ENCODE measurements at regions of chr19 and their contacts with region 1.

Region 1: GRCh38 chr19:3324321-3324856 is 42.0 kb upstream of the NFIC start:
- DNase-seq: peak in 1 of 2 donors; percentile 73
- ATAC-seq: peak; percentile 59

Region 2: DNA sequence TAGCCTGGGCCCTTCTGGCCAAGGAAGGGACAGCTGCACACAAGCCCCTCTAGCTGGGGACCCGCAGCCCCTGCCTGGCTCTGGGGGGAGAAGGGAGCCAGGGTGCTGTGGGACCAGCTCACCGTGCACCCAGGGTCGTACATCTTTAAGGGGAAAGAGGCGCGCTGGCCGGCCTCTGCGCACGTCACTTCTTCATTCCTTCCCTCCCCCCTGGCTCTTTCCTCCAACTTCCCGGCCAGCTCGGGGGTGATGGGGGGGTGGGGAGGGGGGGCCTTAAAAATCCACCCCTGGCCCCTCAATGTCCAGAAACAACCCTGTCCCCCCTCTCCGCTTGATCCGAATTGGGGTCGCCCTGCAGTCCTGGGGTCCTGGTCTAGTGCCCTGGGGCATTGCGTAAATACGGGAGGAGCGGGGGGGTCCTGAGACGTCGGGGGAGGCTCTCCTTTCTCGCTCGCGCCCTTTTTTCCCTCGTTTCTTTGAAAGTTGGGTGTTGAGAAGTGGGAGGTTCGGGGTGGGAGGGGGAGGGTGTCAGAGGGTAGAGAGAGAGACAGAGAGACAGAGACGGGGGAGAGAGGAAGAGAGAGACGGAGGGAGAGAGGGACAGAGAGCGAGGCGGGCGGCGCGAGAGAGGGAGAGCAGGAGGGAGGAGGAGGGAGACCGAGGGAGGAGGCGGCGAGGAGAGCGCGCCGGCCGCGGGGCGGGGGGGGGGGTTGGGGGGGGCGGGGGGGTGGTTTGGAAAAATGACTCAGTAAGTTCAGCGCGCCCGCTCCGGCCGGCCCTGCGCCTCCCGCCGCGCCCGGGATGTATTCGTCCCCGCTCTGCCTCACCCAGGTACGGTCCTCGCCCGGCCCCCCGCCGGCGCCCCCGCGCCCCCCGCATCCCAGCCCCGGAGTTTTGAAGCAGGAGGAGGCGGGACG is 41.7 kb after region 1 on chr19 and contains the start of gene NFIC:
- intact Hi-C with region 1: no loop called
- DNase-seq: peak; percentile 68 to 81
- ATAC-seq: peak; percentile 72
- total RNA-seq, gene NFIC: 52.4 to 57.8 TPM

Region 3: DNA sequence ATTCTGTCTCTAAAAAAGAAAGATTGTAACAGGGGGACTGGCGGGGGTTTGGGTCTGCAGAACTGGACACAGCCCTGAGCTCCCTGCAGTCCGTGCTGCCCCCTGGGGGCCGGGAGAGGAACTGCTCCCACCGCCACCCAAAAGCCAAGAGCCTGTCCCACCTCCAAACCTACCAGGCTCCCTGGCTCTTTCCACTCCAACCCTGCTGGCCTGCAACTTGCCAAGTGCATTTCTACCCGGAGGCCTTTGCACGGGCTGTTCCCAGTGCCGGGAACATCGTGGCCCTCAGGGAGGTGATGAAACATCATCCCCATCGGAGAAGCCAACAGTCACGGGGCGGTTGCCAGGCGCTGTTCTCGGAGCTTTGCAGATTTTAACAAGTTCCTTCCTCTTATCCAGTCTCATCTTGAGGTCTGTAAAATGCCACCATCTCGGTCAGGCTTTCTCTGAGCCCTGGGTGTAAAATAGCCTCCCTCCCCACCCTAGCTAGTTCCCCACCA is 105.2 kb after region 1 on chr19:
- intact Hi-C with region 1: loop called in 1 of 2 experiments (anchors 5 kb)
- DNase-seq: peak; percentile 78 to 91
- ATAC-seq: peak; percentile 75

Region 4: DNA sequence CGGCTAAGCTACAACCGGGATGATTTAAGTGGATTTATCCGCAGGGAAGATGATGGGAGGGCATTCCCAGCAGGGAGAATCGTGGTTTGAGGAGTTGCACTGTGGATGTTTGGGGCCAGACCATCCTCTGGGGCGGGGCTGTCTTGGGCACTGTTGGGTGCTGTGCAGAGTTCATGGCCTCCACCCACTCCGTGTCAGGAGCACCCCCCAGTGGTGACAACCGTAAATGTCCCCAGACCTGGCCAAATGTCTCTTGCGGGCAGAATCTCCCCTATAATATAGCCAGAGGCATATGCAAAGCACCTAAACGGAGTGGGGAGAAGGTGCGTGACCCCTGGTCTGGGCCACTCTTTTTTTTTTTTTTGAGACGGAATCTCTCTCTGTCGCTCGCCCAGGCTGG is 115.7 kb after region 1 on chr19:
- intact Hi-C with region 1: loop called in 1 of 2 experiments (anchors 10 kb)
- DNase-seq: peak in 1 of 2 donors; percentile 72
- ATAC-seq: peak; percentile 64

Region 5: GRCh38 chr19:3471954-3472655 is 147.7 kb after region 1 on chr19:
- intact Hi-C with region 1: loop called (anchors 5 to 10 kb)
- DNase-seq: peak in 1 of 2 donors; percentile 46
- ATAC-seq: peak; percentile 27

Region 6: DNA sequence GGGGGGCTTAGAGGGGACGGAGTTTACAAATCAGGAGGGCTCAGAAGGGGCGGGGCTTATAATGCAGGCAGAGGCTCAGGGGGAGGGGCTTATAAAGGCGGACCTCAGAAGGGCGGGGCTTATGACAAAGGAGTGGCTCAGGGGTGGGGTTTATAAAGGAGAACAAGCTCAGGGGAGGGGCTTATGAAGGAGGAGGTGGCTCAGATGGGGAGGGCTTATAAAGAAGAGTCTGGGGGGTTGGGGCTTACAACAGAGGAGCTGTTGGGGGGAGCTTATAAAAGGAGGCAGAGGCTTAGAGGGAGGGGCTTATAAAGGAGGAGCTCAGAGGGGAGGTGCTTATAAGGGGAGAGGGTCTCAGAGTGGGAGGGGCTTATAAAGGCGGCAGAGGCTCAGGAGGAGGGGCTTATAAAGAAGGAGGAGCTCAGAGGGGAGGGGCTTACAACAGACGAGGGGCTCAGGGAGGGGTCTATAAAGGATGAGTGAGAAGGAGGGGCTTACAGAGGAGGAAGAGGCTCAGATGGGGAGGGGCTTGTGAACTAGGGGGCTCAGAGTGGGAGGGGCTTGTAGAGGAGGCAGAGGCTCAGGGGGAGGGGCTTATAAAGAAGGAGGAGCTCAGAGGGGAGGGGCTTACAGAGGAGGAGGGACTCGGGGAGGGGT is 154.9 kb after region 1 on chr19:
- intact Hi-C with region 1: loop called (anchors 5 to 10 kb)
- DNase-seq: peak in 1 of 2 donors; percentile 58
- ATAC-seq: peak; percentile 12